ENCODE measurements at regions of chr1 and their contacts with region 1.

Region 1: GRCh38 chr1:171741872-171742576 is at the start of gene VAMP4:
- DNase-seq: no peak
- H3K4me3 ChIP-seq: peak within 1 kb of the TSS; percentile 89
- CTCF ChIP-seq: no peak

Region 2: DNA sequence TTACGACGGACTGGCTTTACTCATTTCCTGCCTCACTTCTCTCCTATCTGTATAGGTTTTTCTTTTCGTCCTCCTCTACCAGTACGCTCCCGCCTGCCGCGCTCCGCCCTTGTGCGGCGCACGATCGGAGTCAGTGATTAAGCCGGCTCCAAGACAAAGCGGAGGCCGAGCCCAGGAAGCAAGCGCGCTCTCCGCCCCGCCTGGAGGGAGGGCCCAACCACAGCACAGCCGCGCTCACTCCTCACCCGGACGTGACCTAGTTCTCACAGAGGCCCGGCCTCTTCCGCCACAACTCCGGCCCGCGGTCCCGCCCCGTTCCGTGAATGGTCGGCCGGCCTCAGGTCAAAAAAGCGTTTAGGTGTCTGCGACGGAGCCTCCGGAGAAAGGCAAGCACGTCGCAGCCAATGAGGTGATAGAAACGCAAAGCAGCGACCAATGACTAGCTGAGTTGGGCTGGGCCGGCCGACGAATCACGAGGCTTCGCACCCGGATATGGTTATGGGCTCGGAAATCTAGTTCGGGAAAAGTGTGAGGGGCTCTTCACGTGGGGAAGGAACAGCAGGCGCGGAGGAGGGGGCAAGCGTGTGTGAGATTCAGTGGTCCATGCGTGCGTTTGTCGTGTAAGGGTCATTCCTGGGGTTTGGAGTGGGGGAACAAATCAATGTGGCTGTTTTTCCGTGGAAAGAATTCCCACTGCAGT is 39.3 kb after region 1 on chr1 and contains the start of gene METTL13:
- CTCF ChIA-PET with region 1: no interaction called
- POLR2A ChIA-PET with region 1: interaction called, 16 read pairs
- DNase-seq: peak; percentile 94
- H3K4me3 ChIP-seq: peak within 1 kb of the TSS; percentile 89
- CTCF ChIP-seq: no peak

Measured in AG04449 (cell line).